Activated T-helper 1 cell treated with anti-CD3 and anti-CD28 coated beads, Interleukin-12 subunit alpha, Interleukin-12 subunit beta, Interleukin-2, Interleukin-4 antibody, amounts not matched to agents 30 ng/mL and 10 ng/mL and 1 ng/mL, durations not matched to agents 14 hours and 24 hours and 36 hours (primary cell): ENCODE measurements at regions of chr5 and their contacts with region 1.

Region 1: DNA sequence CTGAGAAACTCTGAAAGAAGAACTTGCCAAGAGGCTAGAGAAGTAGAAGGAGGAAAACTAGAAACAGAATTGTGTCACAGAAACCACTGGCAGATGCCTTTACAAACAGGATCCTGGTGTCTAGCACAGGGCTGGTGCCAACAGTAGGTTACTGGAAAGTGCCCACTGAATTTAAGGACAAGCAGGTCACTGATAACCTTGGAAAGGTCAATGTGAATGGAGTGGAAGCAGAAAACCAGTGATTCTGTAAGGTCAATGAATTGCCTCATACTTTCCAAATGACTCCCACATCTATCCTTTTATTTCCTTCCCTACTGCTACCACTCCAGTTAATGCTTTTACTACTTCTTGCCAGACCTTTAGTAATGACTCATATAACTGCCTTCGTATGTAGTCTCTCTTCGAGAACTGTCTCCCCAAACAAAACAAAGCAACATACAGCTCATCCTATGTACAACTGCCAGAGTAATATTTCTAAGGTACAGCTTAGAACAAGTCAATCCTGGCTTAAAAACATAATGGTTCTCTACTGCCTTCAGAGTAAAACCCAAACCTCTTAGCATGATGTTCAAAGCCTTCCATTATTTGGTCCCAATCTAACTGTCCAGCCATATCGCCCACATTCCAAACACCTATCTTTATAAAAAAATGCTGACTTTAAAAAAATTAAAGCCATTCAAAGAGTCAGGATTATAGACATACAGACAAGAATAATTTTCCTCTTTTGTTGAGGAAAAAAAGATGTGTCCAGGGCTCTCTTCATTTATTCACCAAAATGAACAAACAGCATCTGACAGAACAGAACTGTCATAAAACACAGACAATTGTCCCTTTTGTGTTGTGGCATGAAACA is 52.5 kb downstream of the NR3C1 start:
- DNase-seq: no peak
- H3K4me3 Mint-ChIP-seq: no peak overlapping the region
- H3K27ac Mint-ChIP-seq: no peak overlapping the region
- H3K4me1 Mint-ChIP-seq: peaks cover 21% of the 10 kb centered on the region
- H3K27me3 Mint-ChIP-seq: no peaks in the 10 kb centered on the region

Region 2: DNA sequence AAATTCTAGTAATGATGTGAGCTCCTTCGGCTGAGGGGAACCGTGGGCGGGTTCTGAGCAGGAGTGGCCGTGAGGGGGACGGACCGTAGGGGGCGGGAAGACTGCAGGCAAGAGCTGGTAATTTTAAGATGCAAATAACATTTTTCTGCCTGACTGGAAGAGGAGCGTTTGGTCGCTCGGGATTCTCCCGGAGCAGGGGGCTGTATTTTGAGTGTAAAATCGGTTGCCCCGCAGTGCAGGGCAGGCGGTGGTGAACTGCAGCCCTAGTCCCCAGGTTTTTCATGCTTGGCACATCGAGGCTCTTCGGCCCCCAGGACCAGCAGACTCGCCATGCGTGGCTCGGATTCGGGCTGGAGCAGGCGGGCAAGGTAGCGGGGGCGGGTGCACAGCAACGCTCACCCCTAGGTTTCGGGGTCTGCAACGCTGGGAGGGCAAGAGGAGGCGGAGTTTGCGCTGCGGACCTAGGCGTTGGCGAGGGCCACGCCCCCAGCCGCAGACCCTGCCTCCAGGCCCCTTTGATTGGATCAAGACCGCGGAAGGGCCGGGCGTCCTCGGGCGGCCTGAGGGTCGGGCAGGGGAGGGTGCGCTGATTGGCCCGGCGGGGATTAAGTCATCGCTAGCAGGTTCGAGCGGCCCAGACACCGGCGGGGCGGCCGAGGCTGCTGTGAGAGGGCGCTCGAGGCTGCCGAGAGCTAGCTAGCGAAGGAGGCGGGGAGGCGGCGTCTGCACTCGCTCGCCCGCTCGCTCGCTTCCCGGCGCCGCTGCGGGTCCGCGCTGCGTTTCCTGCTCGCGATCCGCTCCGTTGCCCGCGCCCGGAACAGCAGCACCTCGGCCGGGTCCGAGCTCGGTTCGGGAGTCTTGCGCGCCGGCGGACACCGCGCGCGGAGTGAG is 581.0 kb before region 1 on chr5 and contains the start of gene ARHGAP26:
- intact Hi-C with region 1: loop called (anchors 5 kb)
- DNase-seq: peak; percentile 93
- H3K4me3 Mint-ChIP-seq: peak within 1 kb of the TSS; percentile 91
- H3K27ac Mint-ChIP-seq: peak within 1 kb of the TSS; percentile 89
- H3K4me1 Mint-ChIP-seq: peaks cover 43% of the 10 kb centered on the region
- H3K27me3 Mint-ChIP-seq: peaks cover 7% of the 10 kb centered on the region
- total RNA-seq, gene ARHGAP26: 20.0 and 21.2 TPM in 2 replicates

Region 3: GRCh38 chr5:143023411-143024096 is 327.4 kb before region 1 on chr5:
- intact Hi-C with region 1: loop called (anchors 5 kb)
- DNase-seq: peak; percentile 50
- H3K4me3 Mint-ChIP-seq: peak overlapping the region; percentile 4
- H3K27ac Mint-ChIP-seq: peak overlapping the region; percentile 45
- H3K4me1 Mint-ChIP-seq: peaks cover 67% of the 10 kb centered on the region
- H3K27me3 Mint-ChIP-seq: peaks cover 4% of the 10 kb centered on the region

Region 4: GRCh38 chr5:143182901-143183820 is 167.8 kb before region 1 on chr5:
- intact Hi-C with region 1: loop called (anchors 1 kb)
- DNase-seq: peak; percentile 68
- H3K4me3 Mint-ChIP-seq: peak overlapping the region; percentile 29
- H3K27ac Mint-ChIP-seq: peak overlapping the region; percentile 93
- H3K4me1 Mint-ChIP-seq: peaks cover 77% of the 10 kb centered on the region
- H3K27me3 Mint-ChIP-seq: no peaks in the 10 kb centered on the region

Region 5: DNA sequence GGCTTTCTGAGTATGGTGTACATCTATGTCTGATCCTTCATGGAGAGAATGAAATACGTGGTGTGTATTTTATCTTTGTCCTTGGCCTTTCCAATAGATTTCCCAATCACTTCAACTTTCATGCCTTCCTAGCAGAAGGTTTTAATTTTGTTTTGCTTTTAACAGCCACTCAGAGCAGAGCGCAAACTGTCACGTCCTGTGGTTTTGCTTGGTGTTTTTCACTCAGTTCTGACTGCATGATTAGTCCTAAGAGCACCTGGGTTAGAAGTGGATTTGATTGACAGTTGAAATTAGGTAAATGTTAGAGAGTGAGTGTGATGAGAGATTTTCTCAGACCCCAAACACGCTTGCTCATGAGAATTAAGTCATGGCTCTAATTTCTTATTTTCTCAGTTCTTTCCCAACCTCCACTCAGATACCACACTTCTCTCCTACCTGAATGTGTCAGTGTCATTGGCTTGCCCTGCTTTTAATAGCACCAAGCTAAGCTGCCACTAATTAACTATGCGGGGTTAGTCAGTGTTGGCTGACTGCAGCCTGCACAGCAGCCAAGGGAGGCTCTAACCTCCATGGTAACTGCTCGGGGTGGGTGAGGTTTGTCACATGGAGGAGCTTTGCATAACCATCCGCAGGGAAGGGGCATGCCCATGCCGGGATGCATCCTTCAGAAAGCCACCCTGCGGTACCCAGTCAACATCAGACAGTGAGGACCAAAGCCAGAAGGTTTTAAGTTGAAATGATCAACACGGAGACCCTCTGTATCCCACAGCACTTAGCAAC is 120.9 kb before region 1 on chr5:
- intact Hi-C with region 1: loop called (anchors 2 kb)
- DNase-seq: peak; percentile 45
- H3K4me3 Mint-ChIP-seq: peak overlapping the region; percentile 43
- H3K27ac Mint-ChIP-seq: peak overlapping the region; percentile 87
- H3K4me1 Mint-ChIP-seq: peaks cover 41% of the 10 kb centered on the region
- H3K27me3 Mint-ChIP-seq: no peaks in the 10 kb centered on the region

Region 6: GRCh38 chr5:143281226-143281625 is 69.8 kb before region 1 on chr5:
- intact Hi-C with region 1: no loop called
- DNase-seq: no peak
- H3K4me3 Mint-ChIP-seq: no peak overlapping the region
- H3K27ac Mint-ChIP-seq: no peak overlapping the region
- H3K4me1 Mint-ChIP-seq: peaks cover 1% of the 10 kb centered on the region
- H3K27me3 Mint-ChIP-seq: no peaks in the 10 kb centered on the region

Region 7: DNA sequence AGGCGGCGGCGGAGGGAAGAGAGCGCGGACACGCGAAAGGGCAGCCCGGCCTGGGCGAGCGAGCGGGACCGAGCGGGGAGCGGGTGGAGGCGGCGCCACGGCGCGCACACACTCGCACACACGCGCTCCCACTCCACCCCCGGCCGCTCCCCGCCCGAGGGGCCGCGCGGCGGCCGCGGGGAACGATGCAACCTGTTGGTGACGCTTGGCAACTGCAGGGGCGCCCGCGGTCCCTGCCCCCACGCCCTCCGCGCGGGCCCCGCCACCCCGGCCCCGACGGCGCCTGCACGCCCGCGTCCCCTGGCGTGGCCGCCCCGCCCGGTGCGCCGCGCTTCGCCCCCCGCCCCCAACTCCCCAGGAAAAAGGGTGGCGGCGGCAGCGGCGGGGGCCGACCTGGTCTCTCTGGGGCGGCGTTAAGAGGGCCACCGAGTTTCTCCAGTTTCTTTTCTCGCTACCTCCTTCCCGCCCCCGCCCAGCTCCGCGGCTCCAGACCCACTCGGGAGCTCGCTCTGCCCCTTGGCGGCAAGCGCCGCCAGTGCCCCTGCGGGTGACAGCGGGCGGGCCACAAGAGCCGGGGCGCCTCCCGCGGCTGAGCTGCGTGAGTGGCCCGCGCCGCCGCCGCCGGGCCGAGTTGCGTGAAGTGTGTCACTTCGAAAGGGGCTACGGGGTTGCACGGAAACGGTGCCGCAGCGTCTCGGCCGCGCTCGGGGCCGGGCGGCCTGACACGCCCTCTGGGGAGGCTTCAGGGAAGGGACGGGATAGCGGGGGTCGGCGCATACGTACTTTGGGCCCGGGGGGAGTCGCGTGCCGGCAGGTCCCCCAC is 52.8 kb after region 1 on chr5 and contains the start of gene NR3C1:
- intact Hi-C with region 1: loop called (anchors 2 kb)
- DNase-seq: peak; percentile 82
- H3K4me3 Mint-ChIP-seq: peak within 1 kb of the TSS; percentile 95
- H3K27ac Mint-ChIP-seq: peak within 1 kb of the TSS; percentile 99
- H3K4me1 Mint-ChIP-seq: peaks cover 48% of the 10 kb centered on the region
- H3K27me3 Mint-ChIP-seq: no peaks in the 10 kb centered on the region
- total RNA-seq, gene NR3C1: 62.7 TPM in 2 replicates